WTC11 (cell line): ENCODE measurements at regions of chr11 and their contacts with region 1.

Region 1: DNA sequence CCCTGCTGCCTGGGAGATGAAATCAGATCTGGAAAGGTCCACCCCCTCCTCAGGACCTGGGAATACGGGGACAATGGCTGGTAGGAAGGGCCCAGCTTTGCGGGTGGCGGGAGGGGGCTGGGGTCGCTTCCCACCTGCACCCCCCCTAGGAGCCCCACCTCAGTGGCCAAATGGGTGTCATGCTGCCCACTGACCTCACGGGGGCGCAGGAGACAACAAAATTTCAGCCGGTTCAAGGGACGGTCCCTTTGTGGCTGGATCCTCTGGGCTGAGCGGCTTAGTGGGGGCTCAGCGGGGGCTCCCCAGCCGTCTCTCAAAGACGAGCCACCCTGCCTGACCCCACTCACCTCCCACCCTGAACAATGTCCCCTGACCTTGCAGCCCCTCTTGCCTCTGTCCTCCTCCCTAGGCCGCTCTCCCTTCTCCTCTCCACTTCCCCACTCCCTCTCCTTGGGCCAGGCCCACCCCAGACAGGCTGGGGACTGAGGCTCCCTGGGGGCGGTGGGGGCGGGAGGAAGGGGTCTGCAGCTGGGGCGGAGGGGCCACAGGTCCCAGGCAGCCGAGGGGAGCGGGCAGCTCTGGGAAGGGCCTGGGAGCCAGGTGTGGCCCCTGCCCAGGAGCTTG is 39.3 kb upstream of the H19 start:
- DNase-seq: no peak
- ATAC-seq: peak; percentile 76
- H3K4me3 Mint-ChIP-seq: no peak overlapping the region
- H3K27ac Mint-ChIP-seq: no peak overlapping the region
- H3K4me1 Mint-ChIP-seq: no peaks in the 10 kb centered on the region
- H3K27me3 Mint-ChIP-seq: no peaks in the 10 kb centered on the region
- CTCF ChIP-seq: no peak

Region 2: DNA sequence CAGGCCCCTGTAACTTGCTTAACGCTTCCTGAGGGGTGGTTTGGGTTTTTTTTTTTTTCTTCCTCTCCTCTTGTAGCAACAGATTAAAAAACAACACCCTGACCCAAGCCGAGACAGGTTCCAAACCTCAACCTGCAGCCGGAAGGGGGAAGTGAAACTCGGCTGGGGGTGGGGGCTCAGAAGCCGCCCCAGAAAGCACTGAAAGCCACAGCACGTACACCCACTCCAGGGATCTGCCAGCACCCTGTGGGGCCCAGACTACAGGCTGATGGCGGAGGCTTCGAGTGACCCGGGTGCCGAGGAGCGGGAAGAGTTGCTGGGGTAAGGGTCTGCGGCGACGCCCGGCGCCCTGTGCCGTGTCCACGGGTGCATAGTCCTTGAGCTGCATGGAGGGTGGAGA is 184.1 kb before region 1 on chr11 and contains the start of gene LSP1:
- CTCF ChIA-PET with region 1: no interaction called
- POLR2A ChIA-PET with region 1: no interaction called
- DNase-seq: no peak
- ATAC-seq: no peak
- H3K4me3 Mint-ChIP-seq: no peak within 1 kb of the TSS
- H3K27ac Mint-ChIP-seq: no peak within 1 kb of the TSS
- H3K4me1 Mint-ChIP-seq: no peaks in the 10 kb centered on the region
- H3K27me3 Mint-ChIP-seq: peaks cover 2% of the 10 kb centered on the region; the same call in 1 of the 2 replicates
- CTCF ChIP-seq: no peak
- total RNA-seq, gene LSP1: 0.77 to 1.7 TPM (median 1.0 TPM) in 3 replicates

Region 3: GRCh38 chr11:2002807-2003206 is 34.2 kb before region 1 on chr11:
- CTCF ChIA-PET with region 1: interaction called, 12 read pairs
- POLR2A ChIA-PET with region 1: no interaction called
- DNase-seq: no peak
- ATAC-seq: no peak
- H3K4me3 Mint-ChIP-seq: no peak overlapping the region
- H3K27ac Mint-ChIP-seq: no peak overlapping the region
- H3K4me1 Mint-ChIP-seq: no peaks in the 10 kb centered on the region
- H3K27me3 Mint-ChIP-seq: no peaks in the 10 kb centered on the region
- CTCF ChIP-seq: no peak

Region 4: GRCh38 chr11:2074266-2074825 is 37.4 kb after region 1 on chr11:
- CTCF ChIA-PET with region 1: interaction called, 12 read pairs
- POLR2A ChIA-PET with region 1: no interaction called
- DNase-seq: peak; percentile 60
- ATAC-seq: peak; percentile 84
- H3K4me3 Mint-ChIP-seq: no peak overlapping the region
- H3K27ac Mint-ChIP-seq: no peak overlapping the region
- H3K4me1 Mint-ChIP-seq: no peaks in the 10 kb centered on the region
- H3K27me3 Mint-ChIP-seq: peaks cover 20% of the 10 kb centered on the region
- CTCF ChIP-seq: peak; percentile 78

Region 5: DNA sequence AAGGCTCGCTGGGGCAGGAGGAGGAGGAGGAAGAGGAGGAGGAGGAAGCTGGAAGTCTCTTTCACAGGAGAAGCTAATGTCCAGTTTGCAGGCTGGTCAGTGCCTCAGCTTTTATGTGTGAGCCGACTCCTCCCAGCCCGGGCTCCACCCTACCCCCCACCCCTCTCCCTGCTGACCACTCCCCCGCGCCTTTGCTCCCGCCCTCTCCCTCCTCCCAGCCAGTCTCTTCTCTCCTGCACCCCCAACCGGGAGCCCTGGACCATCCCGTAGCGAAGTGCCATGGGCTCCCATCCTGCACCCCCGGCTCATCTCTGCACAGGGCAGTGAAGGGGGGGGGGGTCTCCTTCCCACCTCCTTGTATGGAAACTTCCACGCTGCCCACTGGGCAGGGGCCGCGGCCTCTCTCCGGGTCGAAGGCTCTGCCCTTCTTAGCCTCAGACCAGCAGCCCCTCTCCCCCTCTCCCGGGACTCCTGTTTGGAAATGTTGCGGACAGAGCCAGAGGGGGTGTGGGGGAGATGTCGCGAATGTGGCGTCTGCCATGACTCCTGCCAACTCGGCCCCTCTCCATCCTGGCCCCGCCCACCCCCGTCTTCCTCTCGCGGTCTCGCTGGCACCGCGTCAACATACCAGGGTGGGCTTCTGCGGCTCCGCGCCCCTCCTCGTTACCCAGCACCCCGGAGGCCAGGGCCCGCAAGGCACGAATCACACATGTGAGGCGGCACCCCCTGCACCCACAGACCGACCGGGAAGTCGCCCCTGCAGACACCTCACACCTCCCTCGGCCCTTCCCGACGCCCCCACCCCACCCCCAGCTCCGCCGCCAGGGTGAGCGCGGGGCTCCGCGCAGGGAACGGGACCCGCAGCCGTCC is 100.5 kb after region 1 on chr11:
- CTCF ChIA-PET with region 1: interaction called, 11 read pairs
- POLR2A ChIA-PET with region 1: interaction called, 3 read pairs
- DNase-seq: peak; percentile 77
- ATAC-seq: peak; percentile 62
- H3K4me3 Mint-ChIP-seq: peak overlapping the region; percentile 61
- H3K27ac Mint-ChIP-seq: no peak overlapping the region
- H3K4me1 Mint-ChIP-seq: peaks cover 11% of the 10 kb centered on the region
- H3K27me3 Mint-ChIP-seq: peaks cover 85% of the 10 kb centered on the region
- CTCF ChIP-seq: no peak